ENCODE measurements at regions of chr11 and their contacts with region 1.

Region 1: GRCh38 chr11:57249384-57250319 is 12.6 kb upstream of the APLNR start:
- DNase-seq: peak; percentile 76
- H3K4me3 ChIP-seq: no peak overlapping the region
- H3K27ac ChIP-seq: no peak overlapping the region
- H3K4me1 ChIP-seq: peaks cover 6% of the 10 kb centered on the region
- H3K27me3 ChIP-seq: peaks cover 5 to 9% of the 10 kb centered on the region in 2 experiments
- CTCF ChIP-seq: peak; percentile 77 to 78
- POLR2A ChIP-seq: no peak

Region 2: GRCh38 chr11:56783448-56784041 is 466.1 kb before region 1 on chr11:
- CTCF ChIA-PET with region 1: interaction called, 5 read pairs
- POLR2A ChIA-PET with region 1: no interaction called
- dilution Hi-C with region 1: no loop called
- intact Hi-C with region 1: loop called (anchors 2 kb)
- DNase-seq: peak; percentile 36
- H3K4me3 ChIP-seq: no peak overlapping the region
- H3K27ac ChIP-seq: no peak overlapping the region
- H3K4me1 ChIP-seq: no peaks in the 10 kb centered on the region
- H3K27me3 ChIP-seq: no peaks in the 10 kb centered on the region
- CTCF ChIP-seq: peak; percentile 18 to 27
- POLR2A ChIP-seq: no peak

Region 3: GRCh38 chr11:57031556-57031955 is 218.1 kb before region 1 on chr11:
- CTCF ChIA-PET with region 1: no interaction called
- POLR2A ChIA-PET with region 1: no interaction called
- dilution Hi-C with region 1: no loop called
- intact Hi-C with region 1: no loop called
- DNase-seq: no peak
- H3K4me3 ChIP-seq: no peak overlapping the region
- H3K27ac ChIP-seq: no peak overlapping the region
- H3K4me1 ChIP-seq: no peaks in the 10 kb centered on the region
- H3K27me3 ChIP-seq: no peaks in the 10 kb centered on the region
- CTCF ChIP-seq: no peak
- POLR2A ChIP-seq: no peak

Region 4: GRCh38 chr11:57116654-57117053 is 133.0 kb before region 1 on chr11:
- CTCF ChIA-PET with region 1: interaction called, 282 read pairs
- POLR2A ChIA-PET with region 1: no interaction called
- dilution Hi-C with region 1: no loop called
- intact Hi-C with region 1: loop called (anchors 1 kb)
- DNase-seq: peak; percentile 57
- H3K4me3 ChIP-seq: no peak overlapping the region
- H3K27ac ChIP-seq: no peak overlapping the region
- H3K4me1 ChIP-seq: no peaks in the 10 kb centered on the region
- H3K27me3 ChIP-seq: peaks cover 0 to 1% of the 10 kb centered on the region in 2 experiments
- CTCF ChIP-seq: peak; percentile 44 to 62
- POLR2A ChIP-seq: no peak

Region 5: GRCh38 chr11:57196596-57196995 is 53.1 kb before region 1 on chr11:
- CTCF ChIA-PET with region 1: interaction called, 16 read pairs
- POLR2A ChIA-PET with region 1: no interaction called
- dilution Hi-C with region 1: no loop called
- intact Hi-C with region 1: no loop called
- DNase-seq: peak; percentile 44
- H3K4me3 ChIP-seq: no peak overlapping the region
- H3K27ac ChIP-seq: no peak overlapping the region
- H3K4me1 ChIP-seq: peaks cover 7% of the 10 kb centered on the region
- H3K27me3 ChIP-seq: peaks cover 2 to 4% of the 10 kb centered on the region in 2 experiments
- CTCF ChIP-seq: no peak
- POLR2A ChIP-seq: no peak

Region 6: DNA sequence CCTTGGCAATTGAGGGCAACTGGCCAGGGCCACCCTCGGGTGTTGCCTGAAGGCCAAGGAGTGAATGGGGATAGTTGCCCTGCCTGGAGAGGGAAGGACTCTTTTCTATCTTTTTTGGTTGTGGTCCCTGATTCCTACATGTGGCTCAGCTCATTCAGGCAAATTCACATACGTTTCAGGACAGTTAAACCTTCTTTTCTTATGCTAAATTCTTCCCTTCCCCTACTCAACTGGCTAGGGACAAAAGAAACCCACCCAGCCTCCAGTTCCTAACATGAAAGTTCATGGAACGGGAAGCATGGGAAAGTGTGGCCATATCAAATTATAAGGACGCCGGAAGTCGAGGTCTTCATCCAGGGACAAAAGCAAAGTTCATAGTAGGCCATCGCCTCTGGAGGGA is 13.7 kb after region 1 on chr11:
- CTCF ChIA-PET with region 1: interaction called, 12 read pairs
- POLR2A ChIA-PET with region 1: no interaction called
- dilution Hi-C with region 1: no loop called
- intact Hi-C with region 1: no loop called
- DNase-seq: no peak
- H3K4me3 ChIP-seq: no peak overlapping the region
- H3K27ac ChIP-seq: no peak overlapping the region
- H3K4me1 ChIP-seq: no peaks in the 10 kb centered on the region
- H3K27me3 ChIP-seq: no peaks in the 10 kb centered on the region
- CTCF ChIP-seq: no peak
- POLR2A ChIP-seq: no peak

Region 7: GRCh38 chr11:57311109-57311936 is 61.7 kb after region 1 on chr11:
- CTCF ChIA-PET with region 1: interaction called, 11 read pairs
- POLR2A ChIA-PET with region 1: no interaction called
- dilution Hi-C with region 1: no loop called
- intact Hi-C with region 1: loop called (anchors 2 kb)
- DNase-seq: peak; percentile 96
- H3K4me3 ChIP-seq: peak overlapping the region; percentile 0 to 56 (median 24)
- H3K27ac ChIP-seq: peak overlapping the region; percentile 53
- H3K4me1 ChIP-seq: peaks cover 18% of the 10 kb centered on the region
- H3K27me3 ChIP-seq: no peaks in the 10 kb centered on the region
- CTCF ChIP-seq: no peak
- POLR2A ChIP-seq: peak; percentile 81

Region 8: GRCh38 chr11:57499413-57499982 is 249.8 kb after region 1 on chr11:
- CTCF ChIA-PET with region 1: no interaction called
- POLR2A ChIA-PET with region 1: no interaction called
- dilution Hi-C with region 1: no loop called
- intact Hi-C with region 1: no loop called
- DNase-seq: peak; percentile 97
- H3K4me3 ChIP-seq: peak overlapping the region in 2 of 3 experiments; percentile 3 to 22
- H3K27ac ChIP-seq: no peak overlapping the region
- H3K4me1 ChIP-seq: peaks cover 7% of the 10 kb centered on the region
- H3K27me3 ChIP-seq: no peaks in the 10 kb centered on the region
- CTCF ChIP-seq: no peak
- POLR2A ChIP-seq: peak; percentile 13

Region 9: GRCh38 chr11:57657194-57658022 is 407.8 kb after region 1 on chr11 and contains the start of gene CLP1:
- CTCF ChIA-PET with region 1: no interaction called
- POLR2A ChIA-PET with region 1: no interaction called
- dilution Hi-C with region 1: no loop called
- intact Hi-C with region 1: no loop called
- DNase-seq: peak; percentile 99
- H3K4me3 ChIP-seq: peak within 1 kb of the TSS; percentile 59 to 98 (median 90)
- H3K27ac ChIP-seq: peak within 1 kb of the TSS; percentile 75
- H3K4me1 ChIP-seq: peaks cover 4% of the 10 kb centered on the region
- H3K27me3 ChIP-seq: no peaks in the 10 kb centered on the region
- CTCF ChIP-seq: no peak
- POLR2A ChIP-seq: peak; percentile 70
- total RNA-seq, gene CLP1: 17.9 and 20.9 TPM in 2 replicates

Measured in endothelial cell of umbilical vein (primary cell).